ENCODE measurements at regions of chr3 and their contacts with region 1.

Region 1: DNA sequence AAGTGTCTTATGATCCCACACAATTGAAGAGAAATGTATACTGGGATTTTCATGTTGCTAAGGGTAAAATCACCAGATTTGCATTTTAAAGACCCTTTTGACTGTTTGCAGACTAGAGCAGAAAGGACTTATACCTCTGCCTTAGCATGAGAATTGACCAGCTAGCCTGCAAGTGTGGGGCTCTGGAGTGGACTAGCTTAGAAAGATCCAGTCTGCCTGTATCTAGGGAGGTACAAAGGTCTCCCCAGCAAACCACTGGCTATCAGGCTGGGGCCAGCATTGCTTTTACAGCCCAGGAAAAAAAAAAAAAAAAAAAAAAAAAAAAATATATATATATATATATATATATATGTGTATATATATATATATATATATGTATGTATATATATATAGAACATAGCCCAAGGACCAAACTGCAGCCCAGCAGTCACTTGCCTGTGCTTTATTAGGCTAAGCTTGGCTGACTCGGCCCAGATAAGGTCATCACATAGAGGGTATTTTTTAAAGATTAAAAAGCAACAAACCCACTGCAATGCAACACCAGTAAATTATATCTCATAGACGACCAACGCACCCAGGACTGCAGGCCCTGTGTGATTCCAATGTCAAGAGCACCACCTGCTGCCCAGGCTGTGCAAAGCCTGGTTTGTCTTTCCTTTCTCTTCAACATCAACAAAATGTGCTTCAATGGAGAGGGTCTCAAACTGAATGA is 63.7 kb downstream of the DCLK3 start:
- DNase-seq: no peak
- ATAC-seq: peak; percentile 66
- H3K4me3 Mint-ChIP-seq: no peak overlapping the region
- H3K27ac Mint-ChIP-seq: no peak overlapping the region
- H3K4me1 Mint-ChIP-seq: no peaks in the 10 kb centered on the region
- H3K27me3 Mint-ChIP-seq: peaks cover 1% of the 10 kb centered on the region
- CTCF ChIP-seq: no peak

Region 2: GRCh38 chr3:35965908-35966307 is 734.8 kb before region 1 on chr3:
- CTCF ChIA-PET with region 1: interaction called, 7 read pairs
- POLR2A ChIA-PET with region 1: no interaction called
- intact Hi-C with region 1: loop called (anchors 1 kb)
- DNase-seq: no peak
- ATAC-seq: no peak
- H3K4me3 Mint-ChIP-seq: no peak overlapping the region
- H3K27ac Mint-ChIP-seq: no peak overlapping the region
- H3K4me1 Mint-ChIP-seq: peaks cover 8% of the 10 kb centered on the region
- H3K27me3 Mint-ChIP-seq: no peaks in the 10 kb centered on the region
- CTCF ChIP-seq: no peak

Region 3: DNA sequence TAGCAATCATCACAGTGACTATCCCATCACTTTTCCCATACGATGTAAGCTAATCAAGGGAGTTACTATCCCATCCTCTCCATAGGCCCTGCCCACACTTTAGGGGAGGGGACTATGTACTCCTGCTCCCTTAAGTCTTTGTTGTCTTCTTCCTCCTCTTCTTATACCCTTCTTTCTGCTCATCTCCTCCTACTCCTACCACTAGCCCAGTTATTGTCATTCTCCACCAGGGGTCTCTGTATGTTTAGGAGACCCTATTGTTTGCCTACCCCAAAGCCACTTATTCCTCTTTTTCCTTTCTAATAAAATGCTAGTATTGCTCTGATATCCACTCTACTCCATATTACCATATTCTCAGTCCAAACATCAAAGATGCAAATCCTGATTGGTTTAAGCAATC is 292.5 kb before region 1 on chr3:
- CTCF ChIA-PET with region 1: no interaction called
- POLR2A ChIA-PET with region 1: no interaction called
- intact Hi-C with region 1: loop called (anchors 2 kb)
- DNase-seq: no peak
- ATAC-seq: no peak
- H3K4me3 Mint-ChIP-seq: no peak overlapping the region
- H3K27ac Mint-ChIP-seq: no peak overlapping the region
- H3K4me1 Mint-ChIP-seq: no peaks in the 10 kb centered on the region
- H3K27me3 Mint-ChIP-seq: no peaks in the 10 kb centered on the region
- CTCF ChIP-seq: no peak

Region 4: DNA sequence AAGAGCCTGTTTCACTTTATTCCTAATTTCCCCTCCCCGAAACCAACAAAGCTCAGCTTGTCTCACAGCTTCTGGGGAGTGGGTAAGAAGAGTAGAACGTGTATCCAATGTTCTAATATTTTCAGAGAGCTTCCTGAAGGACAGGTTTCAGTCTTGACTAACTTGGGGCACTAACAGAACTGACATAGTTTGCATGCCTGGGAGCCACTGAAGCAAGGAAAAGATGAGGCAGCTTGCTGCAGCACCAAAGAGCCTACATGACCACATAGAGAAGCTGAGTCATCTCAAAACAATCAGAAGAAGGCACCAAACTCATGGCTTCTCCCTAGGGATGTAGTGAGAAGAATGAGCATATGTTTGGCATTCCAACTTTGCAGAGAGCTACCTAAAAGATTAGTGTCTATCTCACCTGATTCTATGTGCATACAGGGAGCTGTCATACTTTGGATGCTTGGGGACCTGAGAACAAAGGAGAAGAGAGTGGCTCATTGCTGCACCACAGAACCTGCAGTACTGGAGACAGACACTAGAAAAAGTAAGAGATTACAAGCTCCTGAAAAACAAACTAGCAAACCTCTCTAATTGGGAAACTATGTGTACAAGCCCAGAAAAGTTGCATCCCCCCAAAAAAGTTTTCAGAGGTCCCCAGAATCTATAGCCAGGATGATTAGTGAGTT is 23.2 kb before region 1 on chr3:
- CTCF ChIA-PET with region 1: no interaction called
- POLR2A ChIA-PET with region 1: no interaction called
- intact Hi-C with region 1: no loop called
- DNase-seq: no peak
- ATAC-seq: peak; percentile 49
- H3K4me3 Mint-ChIP-seq: no peak overlapping the region
- H3K27ac Mint-ChIP-seq: peak overlapping the region; percentile 36
- H3K4me1 Mint-ChIP-seq: peaks cover 8% of the 10 kb centered on the region
- H3K27me3 Mint-ChIP-seq: no peaks in the 10 kb centered on the region
- CTCF ChIP-seq: no peak